H1 (cell line): ENCODE measurements at regions of chr7 and their contacts with region 1.

Region 1: DNA sequence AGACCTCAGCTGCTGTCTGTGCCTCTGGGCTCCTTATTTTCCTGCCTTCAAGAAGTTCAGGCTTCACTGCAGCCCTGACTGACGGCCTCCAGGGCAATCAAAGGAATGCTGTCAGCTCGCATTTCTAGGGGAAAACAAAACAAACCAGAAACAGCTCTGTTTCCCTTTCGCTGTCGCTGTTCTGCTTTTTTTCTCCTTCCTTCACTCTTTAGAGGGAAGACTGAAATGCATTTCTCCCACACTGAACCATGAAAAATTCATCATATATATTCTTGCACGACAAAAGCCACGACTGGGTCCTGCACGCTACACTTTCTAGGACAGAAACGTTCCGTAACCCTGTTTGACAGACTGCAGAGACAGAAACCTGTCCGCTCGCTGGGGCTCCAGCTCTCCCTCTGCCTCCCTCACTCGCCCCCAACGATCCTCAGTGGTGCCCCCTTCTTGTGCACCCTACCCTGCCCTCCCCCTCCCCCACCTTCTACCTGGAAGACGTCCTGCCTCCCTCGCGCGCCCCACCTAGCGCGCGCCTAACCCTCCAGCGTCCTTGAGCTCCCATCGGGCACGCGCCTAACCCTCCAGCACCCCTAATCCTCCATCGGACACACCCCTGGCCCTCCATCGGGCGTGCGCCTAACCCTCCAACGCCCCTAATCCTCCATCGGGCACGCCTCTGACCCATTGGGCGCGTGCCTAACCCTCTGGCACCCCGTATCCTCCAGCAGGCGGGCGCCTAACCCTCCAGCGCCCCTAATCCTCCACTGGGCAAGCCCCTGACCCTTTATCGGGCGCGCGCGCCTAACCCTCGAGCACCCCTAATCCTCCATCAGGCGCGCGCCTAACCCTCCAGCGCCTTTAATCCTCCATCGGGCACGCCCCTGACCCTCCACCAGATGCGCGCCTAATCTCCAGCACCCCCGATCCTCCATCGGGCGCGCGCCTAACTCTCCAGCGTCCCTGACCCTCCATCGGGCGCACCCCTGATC is 37.1 kb downstream of the SVOPL start:
- DNase-seq: peak in 1 of 2 experiments; percentile 64
- H3K4me3 ChIP-seq: peak overlapping the region; percentile 48 to 67 (median 54)
- H3K27ac ChIP-seq: 0 out of 2 replicates have a peak overlapping the region, but pooled peaks have one; percentile 50
- H3K4me1 ChIP-seq: peaks cover 7 to 38% (median 19%) of the 10 kb centered on the region in 4 experiments
- H3K27me3 ChIP-seq: no peaks in the 10 kb centered on the region; a peak in 2 of 7 replicates
- CTCF ChIP-seq: no peak
- EP300 ChIP-seq: no peak
- POLR2A ChIP-seq: no peak
- RAD21 ChIP-seq: no peak

Region 2: DNA sequence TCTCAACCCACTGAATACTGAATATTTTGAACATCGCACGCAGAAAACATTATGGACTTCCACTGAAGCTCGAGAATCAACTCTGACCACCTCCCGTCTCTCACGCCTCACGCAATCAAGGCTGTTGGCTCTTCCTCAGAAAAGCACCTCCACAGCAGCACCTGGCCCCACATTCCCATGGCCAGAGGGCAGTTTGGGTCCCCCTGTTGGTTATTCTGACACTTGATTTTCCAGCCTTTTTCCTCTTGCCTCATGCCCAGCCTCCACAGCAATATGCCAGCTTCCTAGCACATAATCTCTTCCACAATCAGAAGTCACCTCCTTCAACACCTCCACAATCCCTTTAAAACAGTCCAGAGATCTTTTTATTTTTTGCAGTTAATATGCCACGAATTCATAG is 18.7 kb before region 1 on chr7:
- CTCF ChIA-PET with region 1: interaction called, 15 read pairs
- POLR2A ChIA-PET with region 1: no interaction called
- DNase-seq: no peak
- H3K4me3 ChIP-seq: no peak overlapping the region
- H3K27ac ChIP-seq: no peak overlapping the region
- H3K4me1 ChIP-seq: no peaks in the 10 kb centered on the region; a peak in 1 of 7 replicates
- H3K27me3 ChIP-seq: no peaks in the 10 kb centered on the region
- CTCF ChIP-seq: peak; percentile 54 to 72 (median 61)
- EP300 ChIP-seq: peak in 1 of 2 experiments; percentile 30; a peak in 1 of 3 replicates
- POLR2A ChIP-seq: no peak
- RAD21 ChIP-seq: peak; percentile 67 to 76